ENCODE measurements at regions of chr12 and their contacts with region 1.

Region 1: GRCh38 chr12:10033783-10034545 is 3.5 kb downstream of the CLEC9A start:
- DNase-seq: no peak
- H3K4me3 ChIP-seq: no peak overlapping the region
- H3K27ac ChIP-seq: no peak overlapping the region
- H3K4me1 ChIP-seq: peaks cover 0 to 6% (median 0%) of the 10 kb centered on the region in 3 donors
- H3K27me3 ChIP-seq: peaks cover 0 to 10% (median 0%) of the 10 kb centered on the region in 4 donors
- CTCF ChIP-seq: peak in 4 of 6 experiments; percentile 58 to 76 (median 64)
- POLR2A ChIP-seq: no peak

Region 2: DNA sequence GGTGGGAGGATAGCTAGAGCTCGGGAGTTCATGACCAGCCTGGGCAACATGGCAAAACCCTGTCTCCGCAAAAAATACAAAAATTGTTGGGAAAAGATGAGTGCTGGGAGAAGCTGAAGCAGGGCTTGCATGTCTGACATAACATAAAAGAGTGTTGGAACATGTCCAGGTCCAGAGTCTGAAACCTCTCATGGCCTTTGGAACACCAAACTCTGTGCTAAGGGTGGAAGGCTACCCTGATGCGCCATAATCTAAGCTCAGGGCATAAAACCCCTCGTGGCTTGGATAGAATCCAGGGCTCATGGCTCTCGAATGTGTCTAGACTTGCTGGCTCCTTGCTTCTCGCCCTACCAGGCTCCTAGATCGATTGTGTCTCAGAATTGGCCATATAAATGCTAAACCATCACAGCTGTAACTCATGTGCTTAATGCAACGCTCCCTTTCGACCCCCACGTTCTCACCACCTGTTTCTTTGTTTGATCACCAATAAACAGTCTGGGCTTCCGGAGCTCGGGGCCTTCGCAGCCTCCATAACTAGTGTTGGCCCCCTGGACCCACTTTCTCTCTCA is 102.8 kb after region 1 on chr12:
- intact Hi-C with region 1: loop called (anchors 5 kb)
- DNase-seq: no peak
- H3K4me3 ChIP-seq: no peak overlapping the region
- H3K27ac ChIP-seq: no peak overlapping the region
- H3K4me1 ChIP-seq: peaks cover 0 to 23% (median 0%) of the 10 kb centered on the region in 3 donors
- H3K27me3 ChIP-seq: no peaks in the 10 kb centered on the region
- CTCF ChIP-seq: no peak
- POLR2A ChIP-seq: no peak

Measured in esophagus squamous epithelium (tissue), 5 donors.